GM13977 (cell line): ENCODE measurements at regions of chr1 and their contacts with region 1.

Region 1: DNA sequence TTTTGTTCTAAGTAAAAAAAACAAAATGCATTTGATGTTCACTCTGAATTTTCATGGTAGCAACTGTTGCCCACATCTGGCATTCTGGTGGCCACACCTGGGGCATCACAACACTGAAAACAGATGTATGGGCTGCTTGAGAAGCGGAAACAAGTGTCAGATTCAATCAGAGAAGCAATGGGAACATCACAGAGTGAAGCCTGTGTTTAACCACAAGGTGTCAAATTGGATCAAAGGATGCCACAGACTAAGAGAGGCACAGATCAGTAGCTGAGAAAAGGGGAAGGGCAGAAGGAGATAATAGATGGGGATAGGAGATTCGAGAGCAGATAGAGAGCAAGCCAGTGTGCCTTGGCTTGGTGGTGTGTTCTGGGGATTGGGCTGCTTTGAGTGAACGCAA is 49.8 kb upstream of the MTF2 start:
- DNase-seq: no peak
- CTCF ChIP-seq: no peak

Region 2: DNA sequence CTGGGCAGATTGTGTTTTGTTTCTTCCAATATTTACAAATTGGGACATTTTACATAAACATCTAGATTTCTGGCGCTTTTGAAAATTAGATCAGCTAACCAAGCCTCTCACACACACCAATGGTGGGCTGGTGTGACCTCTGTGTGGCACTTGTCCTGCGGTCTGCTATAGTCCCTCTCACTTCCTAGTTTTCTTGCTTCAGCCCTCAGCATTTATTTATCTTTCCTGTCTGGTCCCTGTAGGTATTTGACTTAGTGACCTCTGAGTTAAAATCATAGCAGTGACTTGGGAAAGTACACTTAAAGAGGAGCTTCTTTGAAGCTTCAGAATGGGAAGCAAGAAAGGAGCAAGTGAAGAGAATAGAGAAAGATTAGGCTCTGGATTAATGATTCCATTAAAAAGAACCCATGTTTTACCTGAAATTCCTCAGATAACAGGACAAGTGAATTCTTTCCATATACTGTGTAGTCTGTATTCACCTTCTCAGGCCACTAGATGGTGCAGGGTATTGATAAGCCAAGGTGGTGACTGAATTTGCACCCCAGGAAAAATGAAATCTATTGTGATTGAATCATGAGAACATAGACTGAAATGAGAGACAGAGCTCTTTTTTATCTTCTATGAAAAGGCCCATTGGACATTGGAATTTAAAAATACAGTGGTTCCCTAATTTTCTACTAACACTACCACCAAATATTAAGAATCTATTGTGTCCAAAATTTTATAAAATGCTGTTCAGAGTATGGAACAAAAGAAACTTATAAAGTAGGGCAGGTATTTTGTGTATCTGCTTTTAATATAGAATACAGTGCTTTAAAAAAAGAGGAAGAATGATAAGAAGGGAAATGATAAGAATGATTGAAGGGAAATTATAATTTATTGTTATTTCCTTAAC is 60.9 kb before region 1 on chr1:
- in situ Hi-C with region 1: no loop called
- DNase-seq: no peak
- CTCF ChIP-seq: peak; percentile 65

Region 3: DNA sequence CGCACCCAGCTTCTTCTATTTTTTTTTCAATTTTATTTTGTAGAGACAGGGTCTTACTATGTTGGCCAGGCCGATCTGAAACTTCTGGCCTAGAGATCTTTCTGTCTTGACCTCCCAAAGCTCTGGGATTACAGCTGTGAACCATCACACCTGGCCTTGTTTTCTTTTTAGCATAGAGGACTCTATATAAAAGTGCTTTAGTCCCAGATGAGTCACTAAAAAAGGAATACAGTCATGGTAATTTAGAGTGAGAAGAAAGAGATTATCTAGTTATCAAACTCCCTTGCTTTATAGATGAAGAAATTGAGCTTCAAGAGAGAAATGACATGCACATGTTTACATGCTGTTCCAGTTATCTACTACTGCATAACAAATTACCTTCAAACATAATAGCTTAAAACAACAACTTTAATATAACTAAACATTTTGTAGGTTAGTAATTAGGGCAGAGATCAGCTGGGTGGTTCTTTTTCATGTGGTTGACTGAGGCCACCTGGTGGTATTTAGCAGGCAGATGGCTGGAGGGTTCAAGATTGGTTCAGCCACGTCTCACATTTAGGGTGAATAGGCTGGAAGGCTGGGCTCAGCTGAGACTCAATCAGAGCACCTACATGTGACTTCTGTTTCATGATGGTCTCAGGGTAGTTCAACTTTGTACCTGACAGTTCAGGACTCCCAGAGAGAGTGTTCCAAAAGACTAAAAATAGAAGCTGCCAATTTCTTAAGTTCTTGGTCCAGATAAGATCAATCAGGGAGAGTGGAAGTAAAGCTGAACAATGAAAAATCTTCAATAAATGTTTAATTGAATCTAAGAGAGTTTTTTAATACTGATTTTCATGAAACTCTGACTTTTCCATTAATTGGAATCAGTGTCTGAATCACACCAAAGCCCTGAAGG is 32.8 kb after region 1 on chr1:
- in situ Hi-C with region 1: loop called (anchors 5 kb)
- DNase-seq: peak; percentile 50
- CTCF ChIP-seq: peak; percentile 65